Right ventricle myocardium superior (tissue), 1 donor: ENCODE measurements at regions of chr12 and their contacts with region 1.

Region 1: GRCh38 chr12:21607701-21608100 is 3.1 kb upstream of the GYS2 start:
- DNase-seq: no peak
- ATAC-seq: peak; percentile 63

Region 2: GRCh38 chr12:21183721-21184275 is 423.9 kb before region 1 on chr12:
- intact Hi-C with region 1: no loop called
- DNase-seq: no peak
- ATAC-seq: no peak

Region 3: DNA sequence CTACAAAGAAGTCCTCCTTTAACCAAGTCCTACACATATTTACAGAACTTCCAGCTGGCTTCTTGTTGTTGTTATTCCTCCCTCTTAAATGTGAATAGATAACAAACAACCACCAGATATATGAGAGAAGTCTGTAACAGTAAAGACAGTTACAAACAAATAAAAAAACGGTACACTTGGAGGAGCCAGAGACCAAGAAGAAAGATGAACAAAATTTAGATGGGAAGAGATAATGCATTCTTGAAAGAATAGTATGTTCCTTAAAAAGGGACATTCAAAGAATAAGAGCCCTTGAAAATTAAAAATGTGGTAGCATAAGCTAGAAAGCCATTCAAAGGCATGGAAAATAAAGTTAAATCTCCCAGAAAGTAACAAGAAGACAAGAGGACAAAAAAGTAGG is 298.9 kb before region 1 on chr12:
- intact Hi-C with region 1: no loop called
- DNase-seq: no peak
- ATAC-seq: no peak

Region 4: GRCh38 chr12:21539797-21540196 is 67.9 kb before region 1 on chr12:
- intact Hi-C with region 1: loop called (anchors 10 kb)
- DNase-seq: no peak
- ATAC-seq: no peak

Region 5: DNA sequence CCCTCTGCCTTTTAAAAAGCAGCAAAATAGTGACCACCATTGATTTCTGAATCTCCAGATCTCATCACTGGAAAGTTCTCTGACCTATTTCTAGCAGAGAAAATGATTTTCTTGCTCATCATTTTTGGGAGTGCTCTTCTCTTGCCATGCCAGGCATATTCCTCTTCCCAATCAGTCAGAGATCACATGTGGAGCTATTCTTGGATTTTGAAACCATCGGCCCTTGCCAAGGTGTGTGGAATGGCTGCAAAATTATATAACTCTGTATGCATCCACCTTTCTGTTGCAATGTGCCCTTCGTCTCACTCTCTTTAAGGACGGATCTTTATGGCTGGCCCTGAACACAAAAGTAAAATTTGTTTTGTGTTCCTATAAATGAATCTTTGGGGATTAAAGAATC is 75.4 kb after region 1 on chr12:
- intact Hi-C with region 1: loop called (anchors 5 kb)
- DNase-seq: no peak
- ATAC-seq: peak; percentile 75

Region 6: DNA sequence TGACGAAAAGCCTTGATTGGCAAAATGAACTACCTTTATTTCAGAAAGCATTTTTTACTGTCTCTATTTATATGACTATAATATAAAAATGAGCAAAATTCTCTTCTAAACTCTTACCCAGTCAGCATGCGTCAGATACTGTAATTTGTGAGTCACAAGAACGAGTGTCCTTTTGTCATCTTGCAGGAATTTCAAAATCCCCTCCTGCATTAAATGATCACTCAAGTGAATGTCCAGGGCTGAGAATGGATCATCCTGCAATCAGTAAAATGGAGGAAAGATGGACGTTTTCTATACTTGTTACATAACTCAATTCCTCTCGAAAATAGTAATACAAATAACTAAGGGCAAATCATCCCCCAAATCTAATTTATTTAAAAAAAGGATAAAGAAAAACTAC is 244.6 kb after region 1 on chr12:
- intact Hi-C with region 1: no loop called
- DNase-seq: no peak
- ATAC-seq: no peak

Region 7: DNA sequence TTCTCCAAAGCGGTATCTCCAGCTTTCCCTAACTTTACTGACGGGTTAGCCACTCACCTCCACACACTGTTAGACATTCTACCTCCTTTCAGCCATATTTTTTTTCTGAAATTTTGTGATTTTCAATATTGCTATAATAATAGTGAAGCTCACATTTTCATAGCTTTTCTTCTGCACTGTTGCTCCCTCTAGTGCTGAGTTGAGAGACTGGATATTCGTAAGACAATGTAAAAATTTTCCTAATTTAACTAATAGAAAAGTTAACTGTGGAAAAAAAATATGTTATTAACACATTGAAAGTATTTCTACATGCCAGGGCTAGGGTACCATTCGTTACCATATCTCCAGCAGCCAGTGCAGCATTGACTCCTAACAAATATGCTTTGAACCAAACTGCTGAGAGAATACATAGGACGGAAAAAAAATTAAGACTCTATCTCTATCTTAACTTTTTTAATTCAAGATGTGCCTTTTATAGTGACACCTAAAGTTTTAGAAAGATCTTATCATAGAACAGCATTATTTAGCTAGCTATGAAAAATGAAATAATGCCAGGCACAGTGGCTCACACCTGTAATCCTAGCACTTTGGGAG is 382.2 kb after region 1 on chr12:
- intact Hi-C with region 1: no loop called
- DNase-seq: no peak
- ATAC-seq: peak; percentile 67